ENCODE measurements at regions of chr6 and their contacts with region 1.

Region 1: DNA sequence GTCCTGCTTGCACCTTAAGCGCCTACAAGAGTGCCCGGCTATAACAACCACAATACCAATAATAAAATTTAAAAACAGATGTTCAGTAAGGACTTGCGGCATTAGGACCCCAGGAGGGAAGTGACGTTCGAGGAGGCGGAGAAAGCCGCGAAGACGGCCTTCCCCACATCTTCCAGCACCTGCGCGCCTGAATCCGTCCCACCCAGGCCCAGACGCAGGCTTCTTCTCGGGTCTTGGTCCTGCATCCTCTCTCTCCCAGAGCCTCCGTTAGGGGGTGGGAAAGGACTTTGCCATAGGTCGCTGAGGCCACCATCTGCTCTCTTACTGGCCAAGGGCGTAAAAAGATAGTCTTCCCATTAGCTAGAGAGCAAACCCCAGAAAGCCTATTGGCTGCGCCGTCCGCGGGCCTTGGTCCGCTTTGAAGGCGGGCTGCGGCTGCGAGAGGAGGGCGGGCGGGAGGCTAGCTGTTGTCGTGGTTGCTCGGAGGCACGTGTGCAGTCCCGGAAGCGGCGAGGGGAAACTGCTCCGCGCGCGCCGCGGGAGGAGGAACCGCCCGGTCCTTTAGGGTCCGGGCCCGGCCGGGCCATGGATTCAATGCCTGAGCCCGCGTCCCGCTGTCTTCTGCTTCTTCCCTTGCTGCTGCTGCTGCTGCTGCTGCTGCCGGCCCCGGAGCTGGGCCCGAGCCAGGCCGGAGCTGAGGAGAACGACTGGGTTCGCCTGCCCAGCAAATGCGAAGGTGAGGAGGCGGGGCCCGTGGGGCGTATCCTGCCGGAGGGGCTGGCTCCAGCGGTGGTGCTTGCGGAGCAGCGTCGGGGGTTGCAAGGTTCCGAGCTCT is at the start of gene CNPY3:
- DNase-seq: peak; percentile 98
- H3K4me3 Mint-ChIP-seq: peak within 1 kb of the TSS; percentile 100
- H3K27ac Mint-ChIP-seq: peak within 1 kb of the TSS; percentile 94
- H3K4me1 Mint-ChIP-seq: peaks cover 36% of the 10 kb centered on the region
- H3K27me3 Mint-ChIP-seq: no peaks in the 10 kb centered on the region
- total RNA-seq, gene CNPY3: 51.1 to 53.2 TPM

Region 2: DNA sequence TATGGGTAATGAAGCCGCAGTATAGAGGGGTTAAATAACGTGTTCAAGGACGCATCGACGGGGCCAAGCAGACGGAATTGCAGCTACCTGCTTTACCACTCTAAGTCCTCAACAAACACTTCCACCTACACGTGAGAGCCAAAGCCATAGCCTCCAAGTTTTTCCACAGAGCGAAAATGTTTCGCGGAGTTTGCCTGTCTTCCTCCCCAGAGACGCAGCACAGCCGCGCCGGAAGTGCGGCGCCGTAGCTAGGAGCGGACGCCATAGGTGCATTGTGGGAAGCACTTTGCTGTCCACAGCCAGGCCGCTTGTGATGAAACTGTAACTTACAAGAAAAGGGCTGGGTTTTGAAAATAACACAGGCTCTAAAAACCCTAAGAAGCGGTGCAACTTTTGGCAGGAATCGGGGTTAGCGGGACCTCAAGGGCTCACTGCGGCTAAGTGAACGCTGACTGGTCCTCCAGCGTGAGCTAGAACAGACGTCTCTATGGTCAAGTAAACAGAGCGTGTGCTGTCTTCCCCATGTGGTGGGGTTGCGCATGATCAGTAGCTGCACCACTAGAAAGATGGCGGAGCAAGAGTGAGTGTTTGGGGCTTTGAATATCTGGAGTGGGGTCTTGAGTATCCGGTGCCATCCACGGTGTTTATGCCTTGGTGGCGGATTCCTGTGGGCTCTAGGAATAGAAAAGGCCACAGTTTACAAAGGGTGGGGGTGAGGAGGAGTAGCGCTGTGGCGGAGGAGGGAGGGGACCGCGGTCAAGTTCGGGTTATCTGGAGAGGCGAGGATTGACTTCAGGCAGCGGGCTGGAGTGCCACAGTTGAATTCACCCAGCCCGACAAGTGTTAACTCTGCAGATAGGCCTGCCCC is 49.6 kb before region 1 on chr6 and contains the start of gene RPL7L1:
- CTCF ChIA-PET with region 1: interaction called, 4 read pairs
- POLR2A ChIA-PET with region 1: interaction called, 20 read pairs
- DNase-seq: peak; percentile 86
- H3K4me3 Mint-ChIP-seq: peak within 1 kb of the TSS; percentile 94
- H3K27ac Mint-ChIP-seq: peak within 1 kb of the TSS; percentile 92
- H3K4me1 Mint-ChIP-seq: peaks cover 31% of the 10 kb centered on the region
- H3K27me3 Mint-ChIP-seq: no peaks in the 10 kb centered on the region
- total RNA-seq, gene RPL7L1: 71.4 to 74.2 TPM

Region 3: GRCh38 chr6:42978839-42979522 is 49.8 kb after region 1 on chr6 and contains the start of gene PEX6:
- CTCF ChIA-PET with region 1: interaction called, 7 read pairs
- POLR2A ChIA-PET with region 1: interaction called, 57 read pairs
- DNase-seq: peak; percentile 97
- H3K4me3 Mint-ChIP-seq: peak within 1 kb of the TSS; percentile 88
- H3K27ac Mint-ChIP-seq: peak within 1 kb of the TSS; percentile 99
- H3K4me1 Mint-ChIP-seq: peaks cover 51% of the 10 kb centered on the region
- H3K27me3 Mint-ChIP-seq: no peaks in the 10 kb centered on the region
- total RNA-seq, gene PEX6: 27.4 to 29.1 TPM

Region 4: GRCh38 chr6:43013843-43014433 is 84.7 kb after region 1 on chr6 and contains the starts of genes KLHDC3 and MEA1:
- CTCF ChIA-PET with region 1: interaction called, 5 read pairs
- POLR2A ChIA-PET with region 1: interaction called, 28 read pairs
- DNase-seq: peak; percentile 100
- H3K4me3 Mint-ChIP-seq: peak within 1 kb of the TSS; percentile 93
- H3K27ac Mint-ChIP-seq: peak within 1 kb of the TSS; percentile 82
- H3K4me1 Mint-ChIP-seq: peaks cover 62% of the 10 kb centered on the region
- H3K27me3 Mint-ChIP-seq: no peaks in the 10 kb centered on the region
- total RNA-seq, gene KLHDC3: 64.6 to 68.7 TPM
- total RNA-seq, gene MEA1: 56.6 to 60.6 TPM

Region 5: DNA sequence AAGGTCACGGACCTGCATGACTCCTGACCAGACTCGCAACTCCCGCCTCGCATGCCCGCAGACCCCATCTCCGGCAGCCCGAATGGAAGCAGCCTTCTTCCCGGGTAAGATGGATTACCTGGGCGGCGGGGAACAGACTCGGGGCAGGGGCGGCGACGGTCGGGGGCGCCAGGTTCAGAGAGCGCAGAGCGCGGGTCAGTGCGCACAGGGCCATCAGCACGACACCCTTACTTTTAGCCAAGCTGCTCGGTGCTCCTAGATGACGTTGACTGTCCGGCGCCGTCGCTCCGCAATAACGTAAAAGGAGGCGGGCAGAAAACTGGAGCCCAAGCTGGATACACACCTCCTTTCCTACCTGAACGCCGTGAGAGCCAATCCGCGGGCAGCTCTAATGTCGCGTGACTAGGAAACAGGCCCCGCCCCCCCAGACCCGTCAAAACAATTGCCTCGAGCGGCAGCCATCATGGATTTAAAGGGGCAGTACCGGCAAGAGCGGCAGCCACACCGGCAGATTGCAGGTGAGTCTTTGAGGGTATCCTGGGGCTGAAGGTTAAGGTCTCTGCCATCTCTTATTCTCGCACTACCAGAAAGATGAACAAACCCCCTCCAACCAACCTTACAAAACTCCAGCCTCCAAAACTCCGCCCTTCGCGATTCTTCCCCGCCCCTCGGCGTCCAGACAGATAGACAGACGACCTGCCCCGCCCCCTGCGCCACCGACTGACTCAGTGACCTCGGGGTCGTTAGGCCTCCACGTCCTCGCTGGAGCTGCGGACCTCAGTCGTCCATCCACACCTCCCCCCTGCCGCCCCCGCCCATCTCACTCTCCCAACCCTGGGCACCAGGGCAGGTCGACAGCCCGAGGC is 130.2 kb after region 1 on chr6 and contains the starts of genes KLC4 and MRPL2:
- CTCF ChIA-PET with region 1: interaction called, 3 read pairs
- POLR2A ChIA-PET with region 1: interaction called, 15 read pairs
- DNase-seq: peak; percentile 99
- H3K4me3 Mint-ChIP-seq: peak within 1 kb of the TSS; percentile 86
- H3K27ac Mint-ChIP-seq: peak within 1 kb of the TSS; percentile 88
- H3K4me1 Mint-ChIP-seq: peaks cover 41% of the 10 kb centered on the region
- H3K27me3 Mint-ChIP-seq: no peaks in the 10 kb centered on the region
- total RNA-seq, gene KLC4: 19.3 to 20.3 TPM
- total RNA-seq, gene MRPL2: 46.8 to 57.8 TPM

Measured in activated CD4-positive, alpha-beta memory T cell treated with anti-CD3 and anti-CD28 coated beads, Interleukin-2, amount 10 ng/mL, durations not matched to agents 7 days and 5 days (primary cell).